Activated CD8-positive, alpha-beta T cell treated with anti-CD3 and anti-CD28 coated beads, Interleukin-2, amount 10 ng/mL, durations not matched to agents 7 days and 5 days (primary cell): ENCODE measurements at regions of chr5 and their contacts with region 1.

Region 1: GRCh38 chr5:15003511-15003920 is 131.9 kb upstream of the ANKH start:
- DNase-seq: peak; percentile 71
- ATAC-seq: peak; percentile 95
- H3K4me3 Mint-ChIP-seq: no peak overlapping the region
- H3K27ac Mint-ChIP-seq: no peak overlapping the region
- H3K4me1 Mint-ChIP-seq: peaks cover 16% of the 10 kb centered on the region
- H3K27me3 Mint-ChIP-seq: peaks cover 37% of the 10 kb centered on the region

Region 2: GRCh38 chr5:14685757-14686156 is 317.8 kb before region 1 on chr5:
- CTCF ChIA-PET with region 1: interaction called, 25 read pairs
- POLR2A ChIA-PET with region 1: no interaction called
- DNase-seq: peak; percentile 48
- ATAC-seq: peak; percentile 74
- H3K4me3 Mint-ChIP-seq: no peak overlapping the region
- H3K27ac Mint-ChIP-seq: peak overlapping the region; percentile 37
- H3K4me1 Mint-ChIP-seq: peaks cover 26% of the 10 kb centered on the region
- H3K27me3 Mint-ChIP-seq: no peaks in the 10 kb centered on the region

Region 3: GRCh38 chr5:14871210-14872069 is 132.1 kb before region 1 on chr5 and contains the start of gene ANKH:
- CTCF ChIA-PET with region 1: interaction called, 19 read pairs
- POLR2A ChIA-PET with region 1: no interaction called
- DNase-seq: peak; percentile 81
- ATAC-seq: peak; percentile 91
- H3K4me3 Mint-ChIP-seq: peak within 1 kb of the TSS; percentile 83
- H3K27ac Mint-ChIP-seq: peak within 1 kb of the TSS; percentile 83
- H3K4me1 Mint-ChIP-seq: peaks cover 28% of the 10 kb centered on the region
- H3K27me3 Mint-ChIP-seq: peaks cover 7% of the 10 kb centered on the region
- total RNA-seq, gene ANKH: 32.1 to 36.0 TPM

Region 4: DNA sequence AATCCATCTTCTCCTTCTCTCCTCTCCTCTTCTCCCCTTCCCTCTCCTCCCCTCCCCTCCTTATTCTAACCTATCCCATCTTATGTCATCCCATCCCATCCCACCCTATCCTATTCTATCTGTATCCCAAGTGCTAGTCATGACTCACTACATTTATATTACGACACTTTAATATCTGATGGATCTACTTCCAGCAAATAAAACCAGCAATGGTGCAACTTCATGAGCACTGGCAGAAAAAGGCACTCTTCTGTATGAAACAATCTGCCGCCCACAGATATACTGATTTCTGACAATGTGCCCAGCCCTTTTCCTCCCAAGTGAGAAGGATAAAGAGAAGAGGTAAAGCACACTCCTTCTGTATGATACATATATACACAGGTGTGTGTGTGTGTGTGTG is 45.3 kb before region 1 on chr5:
- CTCF ChIA-PET with region 1: interaction called, 12 read pairs
- POLR2A ChIA-PET with region 1: no interaction called
- DNase-seq: no peak
- ATAC-seq: no peak
- H3K4me3 Mint-ChIP-seq: no peak overlapping the region
- H3K27ac Mint-ChIP-seq: no peak overlapping the region
- H3K4me1 Mint-ChIP-seq: no peaks in the 10 kb centered on the region
- H3K27me3 Mint-ChIP-seq: peaks cover 4% of the 10 kb centered on the region

Region 5: GRCh38 chr5:15031151-15031550 is 27.6 kb after region 1 on chr5:
- CTCF ChIA-PET with region 1: no interaction called
- POLR2A ChIA-PET with region 1: no interaction called
- DNase-seq: no peak
- ATAC-seq: no peak
- H3K4me3 Mint-ChIP-seq: no peak overlapping the region
- H3K27ac Mint-ChIP-seq: no peak overlapping the region
- H3K4me1 Mint-ChIP-seq: no peaks in the 10 kb centered on the region
- H3K27me3 Mint-ChIP-seq: peaks cover 9% of the 10 kb centered on the region

Region 6: GRCh38 chr5:15132434-15133405 is 129.2 kb after region 1 on chr5:
- CTCF ChIA-PET with region 1: no interaction called
- POLR2A ChIA-PET with region 1: no interaction called
- DNase-seq: no peak
- ATAC-seq: no peak
- H3K4me3 Mint-ChIP-seq: no peak overlapping the region
- H3K27ac Mint-ChIP-seq: no peak overlapping the region
- H3K4me1 Mint-ChIP-seq: no peaks in the 10 kb centered on the region
- H3K27me3 Mint-ChIP-seq: no peaks in the 10 kb centered on the region